Right cardiac atrium (tissue), 5 donors: ENCODE measurements at regions of chr17 and their contacts with region 1.

Region 1: GRCh38 chr17:81460856-81461460 is 51.6 kb downstream of the ACTG1 start:
- DNase-seq: no peak
- ATAC-seq: no peak
- H3K4me3 ChIP-seq: no peak overlapping the region
- H3K27ac ChIP-seq: no peak overlapping the region
- H3K4me1 ChIP-seq: no peaks in the 10 kb centered on the region
- H3K27me3 ChIP-seq: no peaks in the 10 kb centered on the region

Region 2: GRCh38 chr17:81365148-81365600 is 95.8 kb before region 1 on chr17:
- intact Hi-C with region 1: no loop called
- DNase-seq: peak; percentile 73 to 81 (median 77)
- ATAC-seq: peak; percentile 79 to 81
- H3K4me3 ChIP-seq: no peak overlapping the region
- H3K27ac ChIP-seq: no peak overlapping the region
- H3K4me1 ChIP-seq: no peaks in the 10 kb centered on the region
- H3K27me3 ChIP-seq: no peaks in the 10 kb centered on the region

Region 3: DNA sequence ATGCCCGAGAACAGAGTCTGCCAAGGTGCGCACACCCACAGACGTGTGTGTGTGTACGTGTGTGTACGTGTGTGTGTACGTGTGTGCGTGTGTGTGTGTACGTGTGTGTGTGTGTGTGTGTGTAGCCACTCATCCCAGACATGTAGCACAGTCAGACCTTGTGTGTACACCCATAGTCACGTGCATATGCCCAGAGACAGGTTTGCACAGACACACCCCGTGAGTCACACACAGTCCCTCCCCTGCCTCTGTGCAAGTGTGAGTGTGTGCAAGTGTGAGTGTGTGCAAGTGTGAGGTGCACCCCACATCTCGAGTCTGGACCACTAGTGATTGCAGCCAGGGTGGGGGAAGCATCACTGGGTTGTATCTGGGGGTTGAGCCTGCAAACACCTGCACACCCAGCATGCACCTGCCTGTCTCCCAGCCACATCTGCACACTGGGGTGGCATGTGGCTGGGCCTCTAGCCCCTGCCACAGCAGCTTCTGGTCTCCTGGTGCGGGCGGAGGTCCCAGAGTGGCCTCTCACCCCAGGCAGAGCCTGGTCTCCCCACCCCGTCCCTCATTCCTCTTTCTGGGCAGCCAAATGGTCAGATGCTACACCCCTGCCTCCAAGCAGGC is 42.1 kb before region 1 on chr17:
- intact Hi-C with region 1: no loop called
- DNase-seq: no peak
- ATAC-seq: peak in 1 of 2 donors; percentile 2
- H3K4me3 ChIP-seq: no peak overlapping the region
- H3K27ac ChIP-seq: peak overlapping the region; percentile 43
- H3K4me1 ChIP-seq: peaks cover 16% of the 10 kb centered on the region
- H3K27me3 ChIP-seq: no peaks in the 10 kb centered on the region

Region 4: GRCh38 chr17:81428948-81429774 is 31.8 kb before region 1 on chr17:
- intact Hi-C with region 1: loop called in 1 of 4 experiments (anchors 5 kb)
- DNase-seq: peak; percentile 81 to 95 (median 95)
- ATAC-seq: peak; percentile 77 to 78
- H3K4me3 ChIP-seq: no peak overlapping the region
- H3K27ac ChIP-seq: no peak overlapping the region
- H3K4me1 ChIP-seq: peaks cover 4% of the 10 kb centered on the region
- H3K27me3 ChIP-seq: no peaks in the 10 kb centered on the region